Calu3 (cell line): ENCODE measurements at regions of chr2 and their contacts with region 1.

Region 1: GRCh38 chr2:119647440-119648169 is 31.4 kb upstream of the TMEM177 start:
- DNase-seq: peak; percentile 58
- H3K4me3 Mint-ChIP-seq: no peak overlapping the region
- H3K27ac Mint-ChIP-seq: no peak overlapping the region
- H3K4me1 Mint-ChIP-seq: peaks cover 52% of the 10 kb centered on the region
- H3K27me3 Mint-ChIP-seq: no peaks in the 10 kb centered on the region
- CTCF ChIP-seq: no peak

Region 2: GRCh38 chr2:119333360-119333759 is 314.2 kb before region 1 on chr2:
- CTCF ChIA-PET with region 1: no interaction called
- intact Hi-C with region 1: no loop called
- DNase-seq: no peak
- H3K4me3 Mint-ChIP-seq: no peak overlapping the region
- H3K27ac Mint-ChIP-seq: no peak overlapping the region
- H3K4me1 Mint-ChIP-seq: no peaks in the 10 kb centered on the region
- H3K27me3 Mint-ChIP-seq: no peaks in the 10 kb centered on the region
- CTCF ChIP-seq: no peak

Region 3: DNA sequence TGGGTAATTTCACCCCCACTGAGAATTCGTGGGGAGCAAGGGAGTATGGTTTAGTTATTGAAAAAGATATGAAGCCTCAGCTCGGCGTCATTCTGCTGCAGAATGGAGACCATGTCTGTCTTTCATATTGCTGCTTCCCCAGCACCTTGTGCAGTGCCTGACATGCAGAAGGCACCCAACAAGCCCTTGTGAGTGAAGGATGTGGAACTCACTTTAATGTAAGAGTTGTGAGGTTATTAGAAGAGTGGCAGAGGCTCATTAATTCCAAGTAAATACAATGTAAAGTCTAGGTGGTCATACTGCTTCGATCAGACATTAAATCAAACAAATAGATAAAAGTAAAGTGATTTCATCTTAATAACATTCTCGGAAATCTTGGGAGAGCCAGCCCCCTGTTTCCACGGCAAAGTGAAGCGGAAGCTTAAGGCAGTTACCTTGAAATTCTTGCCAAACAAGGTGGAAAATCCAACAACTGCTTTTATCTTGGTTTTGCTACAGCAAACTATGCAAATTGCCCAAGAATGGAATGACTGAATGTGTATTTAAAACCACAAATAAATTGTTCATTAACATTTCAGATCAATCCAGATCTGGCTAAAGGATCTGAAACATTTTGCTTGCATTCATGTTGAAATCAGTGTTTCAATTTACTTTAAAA is 93.8 kb before region 1 on chr2:
- CTCF ChIA-PET with region 1: no interaction called
- intact Hi-C with region 1: loop called (anchors 5 kb)
- DNase-seq: peak; percentile 65
- H3K4me3 Mint-ChIP-seq: peak overlapping the region; percentile 24
- H3K27ac Mint-ChIP-seq: peak overlapping the region; percentile 83
- H3K4me1 Mint-ChIP-seq: peaks cover 51% of the 10 kb centered on the region
- H3K27me3 Mint-ChIP-seq: no peaks in the 10 kb centered on the region
- CTCF ChIP-seq: no peak

Region 4: DNA sequence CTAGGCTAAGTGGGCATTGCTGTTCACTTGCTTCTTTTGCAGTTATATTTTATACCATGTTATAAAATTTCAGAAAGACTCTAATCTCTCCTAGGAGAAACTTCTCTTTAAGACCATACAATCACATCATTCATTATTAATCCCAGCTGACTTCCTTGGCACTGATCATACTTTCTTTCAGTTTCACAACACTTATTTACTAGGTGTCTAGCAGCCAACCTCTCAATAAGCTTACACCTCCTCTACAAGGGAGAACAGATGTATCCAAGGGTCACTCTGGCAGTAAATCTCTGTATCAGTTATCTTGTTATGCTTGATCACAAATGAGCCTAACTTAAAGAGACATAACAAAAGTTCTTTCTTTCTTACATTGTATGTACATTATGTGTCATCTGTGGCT is 295.5 kb after region 1 on chr2:
- CTCF ChIA-PET with region 1: no interaction called
- intact Hi-C with region 1: no loop called
- DNase-seq: no peak
- H3K4me3 Mint-ChIP-seq: no peak overlapping the region
- H3K27ac Mint-ChIP-seq: no peak overlapping the region
- H3K4me1 Mint-ChIP-seq: no peaks in the 10 kb centered on the region
- H3K27me3 Mint-ChIP-seq: no peaks in the 10 kb centered on the region
- CTCF ChIP-seq: no peak